B cell (primary cell): ENCODE measurements at regions of chr14 and their contacts with region 1.

Region 1: DNA sequence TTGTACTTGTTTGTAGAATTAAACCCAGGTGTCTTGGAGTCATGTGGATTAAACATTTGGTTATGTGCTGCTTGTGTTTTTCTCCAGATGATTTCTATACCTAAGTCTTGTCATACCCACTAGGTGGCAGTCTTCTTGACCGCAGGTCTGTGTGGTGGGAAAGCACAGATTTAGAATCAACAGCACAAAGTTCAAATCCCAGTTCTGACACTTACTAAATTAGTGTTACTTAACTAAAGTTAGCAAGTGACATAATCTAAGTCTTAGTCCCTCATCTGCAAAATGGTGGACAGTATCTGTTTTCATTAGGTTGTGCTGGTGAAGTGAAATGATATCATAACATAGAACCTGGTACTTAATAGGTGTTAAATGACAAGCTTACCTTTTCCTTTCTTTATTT is 151.0 kb upstream of the ARHGAP5 start:
- DNase-seq: peak; percentile 64
- ATAC-seq: peak; percentile 53
- H3K4me3 ChIP-seq: no peak overlapping the region
- H3K4me3 Mint-ChIP-seq: no peak overlapping the region
- H3K27ac ChIP-seq: no peak overlapping the region
- H3K27ac Mint-ChIP-seq: no peak overlapping the region
- H3K4me1 ChIP-seq: no peaks in the 10 kb centered on the region
- H3K4me1 Mint-ChIP-seq: no peaks in the 10 kb centered on the region
- H3K27me3 ChIP-seq: no peaks in the 10 kb centered on the region
- H3K27me3 Mint-ChIP-seq: no peaks in the 10 kb centered on the region
- CTCF ChIP-seq: peak; percentile 74

Region 2: DNA sequence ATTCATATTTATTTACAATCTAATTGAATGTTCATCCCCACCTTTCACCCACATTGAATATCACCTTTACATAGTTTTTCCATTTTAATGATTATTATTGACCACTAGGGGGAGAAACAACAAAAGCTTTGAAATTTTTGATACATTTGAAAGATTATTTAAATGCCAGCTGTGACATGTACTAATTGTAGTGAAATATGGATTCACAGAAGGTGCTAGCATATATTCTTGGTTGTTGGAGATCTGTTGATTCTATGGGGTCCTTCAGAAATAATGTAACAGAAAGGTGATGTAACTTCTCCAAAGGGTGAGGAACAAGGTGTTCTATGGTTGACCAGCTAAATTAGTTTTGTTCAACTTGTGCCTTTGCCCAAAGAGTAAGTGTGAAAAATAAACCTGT is 415.9 kb before region 1 on chr14:
- CTCF ChIA-PET with region 1: interaction called, 4 read pairs
- POLR2A ChIA-PET with region 1: no interaction called
- intact Hi-C with region 1: loop called (anchors 5 kb)
- DNase-seq: peak; percentile 52
- ATAC-seq: no peak
- H3K4me3 ChIP-seq: no peak overlapping the region
- H3K4me3 Mint-ChIP-seq: no peak overlapping the region
- H3K27ac ChIP-seq: no peak overlapping the region
- H3K27ac Mint-ChIP-seq: no peak overlapping the region
- H3K4me1 ChIP-seq: no peaks in the 10 kb centered on the region
- H3K4me1 Mint-ChIP-seq: no peaks in the 10 kb centered on the region
- H3K27me3 ChIP-seq: no peaks in the 10 kb centered on the region
- H3K27me3 Mint-ChIP-seq: no peaks in the 10 kb centered on the region
- CTCF ChIP-seq: peak; percentile 82

Region 3: DNA sequence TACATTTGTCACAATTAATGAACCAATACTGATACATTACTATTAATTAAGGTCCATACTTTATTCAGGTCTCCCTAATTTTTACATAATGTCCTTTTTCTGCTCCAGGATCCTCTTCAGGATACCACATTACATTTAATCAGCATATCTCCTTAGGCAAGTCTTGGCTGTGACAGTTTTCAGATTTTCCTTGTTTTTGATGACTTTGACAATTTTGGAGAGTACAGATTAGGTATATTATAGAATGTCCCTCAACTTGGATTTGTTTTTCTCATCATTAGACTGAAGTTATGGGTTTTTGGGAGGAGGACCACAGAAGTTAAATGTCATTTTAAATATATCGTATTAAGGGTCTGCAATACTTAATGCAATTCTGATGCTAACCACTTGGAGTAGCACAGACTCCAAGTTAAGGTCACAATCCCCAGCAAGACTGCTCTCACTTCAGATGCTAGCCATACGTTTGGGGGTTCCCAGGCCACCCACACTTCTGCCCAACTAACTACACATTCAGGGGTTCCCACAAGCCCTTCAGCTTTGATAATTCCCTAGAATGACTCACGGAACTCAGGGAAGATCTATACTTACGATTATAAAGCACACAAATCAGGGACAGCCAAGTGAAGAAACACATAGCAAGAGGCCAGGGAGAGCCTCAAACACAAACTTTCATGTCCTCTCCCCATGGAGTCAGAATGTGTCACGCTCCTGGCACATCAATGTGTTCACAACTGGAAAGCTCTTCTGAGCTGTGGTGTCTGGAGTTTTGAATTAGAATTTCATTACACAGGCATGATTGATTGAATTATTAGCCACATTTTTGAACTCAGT is 381.9 kb before region 1 on chr14:
- CTCF ChIA-PET with region 1: no interaction called
- POLR2A ChIA-PET with region 1: no interaction called
- intact Hi-C with region 1: no loop called
- DNase-seq: peak; percentile 11
- ATAC-seq: no peak
- H3K4me3 ChIP-seq: no peak overlapping the region
- H3K4me3 Mint-ChIP-seq: no peak overlapping the region
- H3K27ac ChIP-seq: no peak overlapping the region
- H3K27ac Mint-ChIP-seq: no peak overlapping the region
- H3K4me1 ChIP-seq: no peaks in the 10 kb centered on the region
- H3K4me1 Mint-ChIP-seq: no peaks in the 10 kb centered on the region
- H3K27me3 ChIP-seq: peaks cover 0 to 2% (median 0%) of the 10 kb centered on the region in 4 experiments
- H3K27me3 Mint-ChIP-seq: peaks cover 14% of the 10 kb centered on the region
- CTCF ChIP-seq: peak; percentile 28

Region 4: GRCh38 chr14:31895206-31895605 is 30.9 kb before region 1 on chr14:
- CTCF ChIA-PET with region 1: no interaction called
- POLR2A ChIA-PET with region 1: no interaction called
- intact Hi-C with region 1: no loop called
- DNase-seq: no peak
- ATAC-seq: no peak
- H3K4me3 ChIP-seq: no peak overlapping the region
- H3K4me3 Mint-ChIP-seq: no peak overlapping the region
- H3K27ac ChIP-seq: no peak overlapping the region
- H3K27ac Mint-ChIP-seq: no peak overlapping the region
- H3K4me1 ChIP-seq: peaks cover 19 to 31% of the 10 kb centered on the region in 2 donors
- H3K4me1 Mint-ChIP-seq: peaks cover 25% of the 10 kb centered on the region
- H3K27me3 ChIP-seq: no peaks in the 10 kb centered on the region
- H3K27me3 Mint-ChIP-seq: no peaks in the 10 kb centered on the region
- CTCF ChIP-seq: no peak

Region 5: GRCh38 chr14:32070282-32070681 is 144.2 kb after region 1 on chr14:
- CTCF ChIA-PET with region 1: interaction called, 12 read pairs
- POLR2A ChIA-PET with region 1: no interaction called
- intact Hi-C with region 1: loop called (anchors 10 kb)
- DNase-seq: no peak
- ATAC-seq: no peak
- H3K4me3 ChIP-seq: no peak overlapping the region
- H3K4me3 Mint-ChIP-seq: no peak overlapping the region
- H3K27ac ChIP-seq: no peak overlapping the region
- H3K27ac Mint-ChIP-seq: no peak overlapping the region
- H3K4me1 ChIP-seq: no peaks in the 10 kb centered on the region
- H3K4me1 Mint-ChIP-seq: peaks cover 1% of the 10 kb centered on the region
- H3K27me3 ChIP-seq: peaks cover 0 to 2% (median 0%) of the 10 kb centered on the region in 4 experiments
- H3K27me3 Mint-ChIP-seq: peaks cover 3% of the 10 kb centered on the region
- CTCF ChIP-seq: no peak

Region 6: DNA sequence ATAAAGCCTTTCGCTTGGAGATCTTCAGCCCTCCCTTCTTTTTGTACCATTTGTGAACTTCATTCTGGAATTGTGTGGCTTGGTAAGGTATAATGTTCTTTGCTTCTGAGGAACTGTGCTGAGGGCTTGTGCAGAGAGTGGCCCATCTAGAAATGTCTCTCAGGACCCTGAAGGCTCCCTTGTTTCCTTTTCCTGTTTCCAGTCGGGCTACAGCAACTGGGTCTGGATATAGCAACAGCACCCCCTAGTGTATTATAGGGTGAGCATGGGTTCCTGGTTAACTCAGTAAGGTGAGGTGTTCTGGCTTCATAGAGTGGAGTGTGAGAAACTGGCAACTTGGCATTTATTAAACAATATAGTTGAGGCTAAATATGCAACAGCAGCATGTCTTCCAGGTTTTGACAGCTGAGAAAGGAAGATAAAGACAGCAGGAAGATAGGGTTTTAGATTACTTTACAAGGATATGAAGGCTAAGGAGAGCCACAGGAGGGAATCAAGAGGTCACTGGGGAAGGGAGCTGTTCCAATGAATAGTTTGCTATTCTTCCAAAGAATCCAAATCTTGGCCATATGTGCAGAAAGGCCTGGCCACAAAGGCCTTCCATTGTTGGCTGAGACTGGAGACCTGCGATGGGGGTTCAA is 326.0 kb after region 1 on chr14:
- CTCF ChIA-PET with region 1: interaction called, 219 read pairs
- POLR2A ChIA-PET with region 1: no interaction called
- intact Hi-C with region 1: loop called (anchors 1 kb)
- DNase-seq: peak; percentile 77
- ATAC-seq: peak; percentile 90
- H3K4me3 ChIP-seq: no peak overlapping the region
- H3K4me3 Mint-ChIP-seq: no peak overlapping the region
- H3K27ac ChIP-seq: no peak overlapping the region
- H3K27ac Mint-ChIP-seq: no peak overlapping the region
- H3K4me1 ChIP-seq: peaks cover 0 to 5% of the 10 kb centered on the region in 2 donors
- H3K4me1 Mint-ChIP-seq: no peaks in the 10 kb centered on the region
- H3K27me3 ChIP-seq: no peaks in the 10 kb centered on the region
- H3K27me3 Mint-ChIP-seq: no peaks in the 10 kb centered on the region
- CTCF ChIP-seq: peak; percentile 87

Region 7: GRCh38 chr14:32469388-32470160 is 543.5 kb after region 1 on chr14:
- CTCF ChIA-PET with region 1: no interaction called
- POLR2A ChIA-PET with region 1: no interaction called
- intact Hi-C with region 1: loop called (anchors 5 kb)
- DNase-seq: peak; percentile 17
- ATAC-seq: no peak
- H3K4me3 ChIP-seq: no peak overlapping the region
- H3K4me3 Mint-ChIP-seq: no peak overlapping the region
- H3K27ac ChIP-seq: no peak overlapping the region
- H3K27ac Mint-ChIP-seq: no peak overlapping the region
- H3K4me1 ChIP-seq: no peaks in the 10 kb centered on the region
- H3K4me1 Mint-ChIP-seq: no peaks in the 10 kb centered on the region
- H3K27me3 ChIP-seq: no peaks in the 10 kb centered on the region
- H3K27me3 Mint-ChIP-seq: no peaks in the 10 kb centered on the region
- CTCF ChIP-seq: peak; percentile 22